Right ventricle myocardium superior (tissue), 1 donor: ENCODE measurements at regions of chr5 and their contacts with region 1.

Region 1: GRCh38 chr5:179795863-179796833 is 2.4 kb downstream of the LTC4S start:
- DNase-seq: peak; percentile 89
- ATAC-seq: peak; percentile 81

Region 2: DNA sequence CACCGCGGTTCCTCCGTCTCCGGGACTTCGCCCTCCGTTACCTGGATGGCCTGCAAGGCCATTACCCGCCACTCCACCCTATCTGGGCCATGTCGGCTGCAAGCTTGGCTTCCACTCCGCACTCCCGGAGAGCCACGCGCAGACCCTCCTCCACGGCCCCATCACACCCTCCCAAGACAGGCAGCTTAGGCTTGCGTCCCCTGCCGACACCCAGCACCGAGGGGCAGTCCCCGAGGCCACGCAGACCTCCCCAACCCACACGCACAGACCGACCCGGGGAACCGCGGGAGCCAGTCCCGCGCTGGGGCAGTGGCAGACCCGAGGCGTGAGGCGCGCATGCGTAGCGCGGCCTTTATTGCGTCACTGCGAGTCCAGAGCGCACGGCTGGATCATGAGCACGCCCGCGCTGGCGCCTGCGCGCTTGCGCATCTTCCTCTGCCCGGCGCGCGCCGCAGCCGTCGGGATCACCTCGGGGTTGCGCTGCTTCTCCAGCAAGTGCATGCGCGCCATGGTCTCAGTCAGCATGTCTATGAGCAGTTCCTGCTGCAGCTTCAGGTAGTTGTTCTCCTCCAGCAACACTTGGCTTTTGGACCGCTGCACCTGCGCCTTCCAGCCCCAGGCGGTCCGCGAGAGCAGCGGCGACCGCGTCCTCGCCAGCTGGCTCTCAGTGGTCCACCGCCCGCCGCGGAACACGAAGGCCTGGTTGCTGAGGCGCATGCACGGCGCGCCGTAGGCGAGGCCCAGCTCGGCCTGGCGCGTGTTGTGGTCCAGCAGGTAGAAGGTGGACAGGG is 117.7 kb before region 1 on chr5:
- intact Hi-C with region 1: loop called (anchors 10 kb)
- DNase-seq: peak; percentile 98
- ATAC-seq: peak; percentile 99